CD8-positive, alpha-beta memory T cell (primary cell): ENCODE measurements at regions of chr9 and their contacts with region 1.

Region 1: DNA sequence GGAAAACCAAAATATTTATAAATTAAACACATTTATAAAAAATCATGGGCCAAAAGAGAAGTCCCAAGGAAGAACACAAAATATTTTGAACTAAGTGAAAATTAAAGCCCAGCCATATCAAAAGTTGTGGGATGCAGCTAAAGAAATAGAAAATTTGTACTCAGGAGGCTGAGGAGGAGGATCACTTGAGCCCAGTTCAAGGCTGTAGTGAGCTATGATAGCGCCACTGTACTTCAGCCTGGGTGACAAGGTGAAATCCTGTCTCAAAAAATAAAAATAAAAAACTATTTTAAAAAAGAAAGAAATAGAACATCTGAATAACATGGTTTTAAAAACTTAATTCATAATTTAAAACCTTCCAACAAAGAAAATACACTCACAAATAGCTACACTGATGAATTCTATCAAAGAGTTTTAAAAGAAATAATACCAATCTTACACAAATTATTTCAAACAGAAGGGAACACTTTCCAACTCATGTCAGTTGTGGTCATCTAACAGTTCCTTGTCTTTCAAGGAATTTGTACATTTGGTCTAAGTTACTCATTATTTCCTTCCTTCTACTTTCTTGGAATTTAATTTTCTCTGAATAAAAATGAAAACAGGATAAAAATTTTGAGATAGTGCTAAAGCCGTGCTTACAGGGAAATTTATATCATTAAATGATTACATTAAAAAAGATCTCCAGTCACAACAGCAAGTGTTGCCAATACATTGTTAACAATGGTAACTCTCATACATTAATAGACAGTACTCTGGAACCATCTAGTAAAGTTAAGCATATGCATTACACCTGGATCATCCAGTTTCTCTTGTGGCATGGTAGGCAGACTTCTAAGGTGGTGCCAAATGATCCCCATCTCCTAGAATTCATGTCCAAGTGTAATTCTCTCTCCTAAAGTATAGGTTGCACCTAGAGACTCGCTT is 17.8 kb downstream of the PTBP3 start:
- DNase-seq: no peak
- H3K4me3 ChIP-seq: no peak overlapping the region
- H3K4me3 Mint-ChIP-seq: peak overlapping the region; percentile 8 to 78 (median 65)
- H3K27ac ChIP-seq: peak overlapping the region; percentile 38
- H3K27ac Mint-ChIP-seq: peak overlapping the region in 6 of 8 donors; percentile 56 to 83 (median 71)
- H3K4me1 ChIP-seq: peaks cover 34% of the 10 kb centered on the region
- H3K4me1 Mint-ChIP-seq: peaks cover 63 to 95% (median 86%) of the 10 kb centered on the region in 3 donors
- H3K27me3 ChIP-seq: no peaks in the 10 kb centered on the region
- H3K27me3 Mint-ChIP-seq: peaks cover 0 to 1% of the 10 kb centered on the region in 2 donors

Region 2: DNA sequence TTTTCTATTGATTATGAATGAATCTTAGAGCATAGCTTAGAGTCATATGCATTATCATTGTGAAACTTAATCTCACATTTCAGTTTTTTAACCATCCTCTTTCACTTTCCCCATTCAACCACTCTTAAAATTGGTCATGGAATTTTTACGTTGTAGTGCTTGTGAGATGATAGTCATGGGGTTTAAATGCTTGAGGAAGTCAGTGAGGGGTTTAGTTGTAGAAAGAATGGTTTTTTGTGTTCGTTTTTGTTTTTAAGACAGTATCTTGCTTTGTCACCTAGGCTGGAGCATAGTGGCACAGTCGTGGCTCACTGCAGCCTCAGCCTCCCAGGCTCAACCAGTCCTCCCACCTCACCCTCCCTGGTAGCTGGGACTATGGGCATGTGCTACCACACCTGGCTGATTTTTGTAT is 399.4 kb before region 1 on chr9:
- CTCF ChIA-PET with region 1: no interaction called
- POLR2A ChIA-PET with region 1: no interaction called
- DNase-seq: no peak
- H3K4me3 ChIP-seq: no peak overlapping the region
- H3K4me3 Mint-ChIP-seq: peak overlapping the region; percentile 25 to 78 (median 59)
- H3K27ac ChIP-seq: no peak overlapping the region
- H3K27ac Mint-ChIP-seq: peak overlapping the region in 5 of 8 donors; percentile 22 to 78 (median 61)
- H3K4me1 ChIP-seq: peaks cover 45% of the 10 kb centered on the region
- H3K4me1 Mint-ChIP-seq: peaks cover 49 to 68% (median 65%) of the 10 kb centered on the region in 3 donors
- H3K27me3 ChIP-seq: no peaks in the 10 kb centered on the region
- H3K27me3 Mint-ChIP-seq: no peaks in the 10 kb centered on the region

Region 3: DNA sequence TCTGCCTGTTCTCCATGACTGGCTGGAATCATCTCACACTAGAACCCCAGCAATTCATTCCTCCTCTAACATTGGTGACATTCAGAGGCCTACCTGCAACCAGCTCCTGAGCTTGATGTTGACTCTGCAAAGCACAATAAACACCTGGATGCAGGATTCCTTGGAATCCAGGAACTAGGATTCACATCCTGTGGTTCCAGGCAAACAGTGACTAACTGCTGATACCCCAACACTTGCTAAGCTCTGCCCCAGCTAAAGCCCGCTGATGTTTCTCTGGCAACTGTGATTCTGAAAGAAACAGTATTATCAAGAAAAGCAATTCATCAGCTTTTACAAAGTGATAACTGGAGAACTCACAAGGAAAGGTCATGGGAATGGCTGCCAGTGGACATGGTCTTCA is 169.7 kb before region 1 on chr9:
- CTCF ChIA-PET with region 1: no interaction called
- POLR2A ChIA-PET with region 1: no interaction called
- DNase-seq: no peak
- H3K4me3 ChIP-seq: no peak overlapping the region
- H3K4me3 Mint-ChIP-seq: no peak overlapping the region
- H3K27ac ChIP-seq: no peak overlapping the region
- H3K27ac Mint-ChIP-seq: peak overlapping the region in 1 of 8 donors; percentile 32
- H3K4me1 ChIP-seq: no peaks in the 10 kb centered on the region
- H3K4me1 Mint-ChIP-seq: no peaks in the 10 kb centered on the region
- H3K27me3 ChIP-seq: no peaks in the 10 kb centered on the region
- H3K27me3 Mint-ChIP-seq: peaks cover 0 to 2% of the 10 kb centered on the region in 2 donors

Region 4: GRCh38 chr9:112295174-112295573 is 20.4 kb before region 1 on chr9:
- CTCF ChIA-PET with region 1: no interaction called
- POLR2A ChIA-PET with region 1: interaction called, 14 read pairs
- DNase-seq: no peak
- H3K4me3 ChIP-seq: no peak overlapping the region
- H3K4me3 Mint-ChIP-seq: no peak overlapping the region
- H3K27ac ChIP-seq: no peak overlapping the region
- H3K27ac Mint-ChIP-seq: no peak overlapping the region
- H3K4me1 ChIP-seq: peaks cover 7% of the 10 kb centered on the region
- H3K4me1 Mint-ChIP-seq: peaks cover 60 to 80% (median 76%) of the 10 kb centered on the region in 3 donors
- H3K27me3 ChIP-seq: no peaks in the 10 kb centered on the region
- H3K27me3 Mint-ChIP-seq: no peaks in the 10 kb centered on the region

Region 5: GRCh38 chr9:112339886-112340285 is 24.3 kb after region 1 on chr9:
- CTCF ChIA-PET with region 1: no interaction called
- POLR2A ChIA-PET with region 1: no interaction called
- DNase-seq: no peak
- H3K4me3 ChIP-seq: no peak overlapping the region
- H3K4me3 Mint-ChIP-seq: no peak overlapping the region
- H3K27ac ChIP-seq: no peak overlapping the region
- H3K27ac Mint-ChIP-seq: no peak overlapping the region
- H3K4me1 ChIP-seq: peaks cover 2% of the 10 kb centered on the region
- H3K4me1 Mint-ChIP-seq: peaks cover 0 to under 1% (median 0%) of the 10 kb centered on the region in 3 donors
- H3K27me3 ChIP-seq: no peaks in the 10 kb centered on the region
- H3K27me3 Mint-ChIP-seq: peaks cover 0 to 2% of the 10 kb centered on the region in 2 donors

Region 6: DNA sequence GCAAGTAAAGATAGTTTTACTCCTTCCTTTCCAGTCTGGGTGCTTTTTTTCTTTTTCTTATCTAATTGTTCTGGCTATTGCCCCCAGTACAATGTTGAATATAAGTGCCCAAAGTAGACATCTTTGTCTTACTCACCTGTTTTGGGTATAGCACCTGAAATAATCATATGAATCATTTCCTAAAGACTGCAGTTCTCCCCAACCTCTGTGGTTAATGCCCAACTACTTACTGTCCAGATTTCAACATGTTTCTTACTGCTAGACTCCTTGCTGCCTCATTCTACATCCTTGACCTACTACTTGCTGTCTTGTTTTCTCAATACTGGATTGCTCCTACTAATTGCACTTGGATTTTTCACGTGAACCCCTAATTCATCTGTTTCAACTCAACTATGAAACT is 55.5 kb after region 1 on chr9:
- CTCF ChIA-PET with region 1: no interaction called
- POLR2A ChIA-PET with region 1: no interaction called
- DNase-seq: no peak
- H3K4me3 ChIP-seq: no peak overlapping the region
- H3K4me3 Mint-ChIP-seq: no peak overlapping the region
- H3K27ac ChIP-seq: no peak overlapping the region
- H3K27ac Mint-ChIP-seq: no peak overlapping the region
- H3K4me1 ChIP-seq: no peaks in the 10 kb centered on the region
- H3K4me1 Mint-ChIP-seq: no peaks in the 10 kb centered on the region
- H3K27me3 ChIP-seq: no peaks in the 10 kb centered on the region
- H3K27me3 Mint-ChIP-seq: no peaks in the 10 kb centered on the region